ENCODE measurements at regions of chr2 and their contacts with region 1.

Region 1: GRCh38 chr2:189674374-189675112 is at the start of gene ANKAR:
- DNase-seq: peak; percentile 94
- ATAC-seq: peak; percentile 97
- H3K4me3 ChIP-seq: peak within 1 kb of the TSS; percentile 72 to 92 (median 85)
- H3K4me3 Mint-ChIP-seq: peak within 1 kb of the TSS; percentile 97
- H3K27ac ChIP-seq: peak within 1 kb of the TSS; percentile 93 to 98
- H3K27ac Mint-ChIP-seq: peak within 1 kb of the TSS; percentile 99
- H3K4me1 ChIP-seq: peaks cover 17 to 26% of the 10 kb centered on the region in 2 donors
- H3K4me1 Mint-ChIP-seq: peaks cover 38% of the 10 kb centered on the region
- H3K27me3 ChIP-seq: no peaks in the 10 kb centered on the region
- H3K27me3 Mint-ChIP-seq: no peaks in the 10 kb centered on the region
- CTCF ChIP-seq: peak; percentile 96
- total RNA-seq, gene ANKAR: 23.4 and 24.8 TPM in 2 replicates

Region 2: GRCh38 chr2:189698020-189698887 is 23.7 kb after region 1 on chr2:
- CTCF ChIA-PET with region 1: interaction called, 57 read pairs
- POLR2A ChIA-PET with region 1: no interaction called
- intact Hi-C with region 1: loop called (anchors 1 kb)
- DNase-seq: peak; percentile 70
- ATAC-seq: peak; percentile 57
- H3K4me3 ChIP-seq: no peak overlapping the region
- H3K4me3 Mint-ChIP-seq: no peak overlapping the region
- H3K27ac ChIP-seq: no peak overlapping the region
- H3K27ac Mint-ChIP-seq: peak overlapping the region; percentile 5
- H3K4me1 ChIP-seq: peaks cover 0 to 4% of the 10 kb centered on the region in 2 donors
- H3K4me1 Mint-ChIP-seq: peaks cover 2% of the 10 kb centered on the region
- H3K27me3 ChIP-seq: no peaks in the 10 kb centered on the region
- H3K27me3 Mint-ChIP-seq: no peaks in the 10 kb centered on the region
- CTCF ChIP-seq: peak; percentile 82

Region 3: DNA sequence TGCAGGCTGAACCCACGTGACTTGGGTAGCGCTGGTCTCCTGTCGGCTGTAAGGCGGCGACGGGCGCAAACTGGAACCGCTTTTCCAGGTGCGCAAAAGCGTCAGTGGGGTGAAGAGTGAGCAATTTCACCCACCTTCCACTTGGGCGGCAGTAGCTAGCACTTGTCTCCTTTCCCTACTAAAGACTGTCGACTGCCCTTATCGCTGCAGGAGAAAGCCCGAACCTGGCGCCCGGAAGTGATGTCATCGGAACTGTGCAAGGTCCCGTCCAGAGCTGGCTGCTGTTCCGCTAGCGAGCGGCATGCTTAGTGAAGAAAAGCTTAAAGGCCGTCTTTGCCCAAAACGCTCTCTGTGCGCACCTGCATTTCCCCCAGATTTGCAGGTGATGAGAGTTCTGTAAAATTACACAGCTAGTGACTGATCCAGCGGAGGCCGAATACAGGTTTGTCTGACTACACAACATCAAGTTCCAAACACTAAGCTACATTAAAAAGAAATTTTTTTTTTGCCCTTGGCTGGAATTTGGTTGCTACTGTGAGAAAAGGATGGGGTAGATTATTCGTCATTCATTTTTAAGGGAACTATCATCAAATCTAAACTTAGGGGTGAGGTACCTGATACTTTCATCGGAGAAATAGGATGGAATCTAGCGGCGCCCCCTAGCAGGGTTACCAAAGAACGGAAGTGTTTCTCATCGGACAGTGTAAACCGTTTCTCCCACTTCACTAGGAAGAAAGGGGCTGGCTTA is 88.2 kb after region 1 on chr2 and contains the start of gene OSGEPL1:
- CTCF ChIA-PET with region 1: interaction called, 37 read pairs
- POLR2A ChIA-PET with region 1: interaction called, 9 read pairs
- intact Hi-C with region 1: loop called (anchors 1 kb)
- DNase-seq: peak; percentile 96
- ATAC-seq: peak; percentile 92
- H3K4me3 ChIP-seq: peak within 1 kb of the TSS; percentile 67 to 100 (median 95)
- H3K4me3 Mint-ChIP-seq: peak within 1 kb of the TSS; percentile 98
- H3K27ac ChIP-seq: peak within 1 kb of the TSS; percentile 77 to 89
- H3K27ac Mint-ChIP-seq: peak within 1 kb of the TSS; percentile 98
- H3K4me1 ChIP-seq: peaks cover 9 to 10% of the 10 kb centered on the region in 2 donors
- H3K4me1 Mint-ChIP-seq: peaks cover 6% of the 10 kb centered on the region
- H3K27me3 ChIP-seq: no peaks in the 10 kb centered on the region
- H3K27me3 Mint-ChIP-seq: no peaks in the 10 kb centered on the region
- CTCF ChIP-seq: peak; percentile 73
- total RNA-seq, gene OSGEPL1: 11.2 and 12.6 TPM in 2 replicates

Region 4: GRCh38 chr2:190180313-190181122 is 506.0 kb after region 1 on chr2:
- CTCF ChIA-PET with region 1: no interaction called
- POLR2A ChIA-PET with region 1: no interaction called
- intact Hi-C with region 1: loop called (anchors 10 kb)
- DNase-seq: peak; percentile 70
- ATAC-seq: peak; percentile 89
- H3K4me3 ChIP-seq: peak overlapping the region in 4 of 5 experiments; percentile 48 to 71 (median 60)
- H3K4me3 Mint-ChIP-seq: peak overlapping the region; percentile 87
- H3K27ac ChIP-seq: no peak overlapping the region
- H3K27ac Mint-ChIP-seq: peak overlapping the region; percentile 85
- H3K4me1 ChIP-seq: peaks cover 16 to 22% of the 10 kb centered on the region in 2 donors
- H3K4me1 Mint-ChIP-seq: peaks cover 26% of the 10 kb centered on the region
- H3K27me3 ChIP-seq: peaks cover 0 to 9% (median 0%) of the 10 kb centered on the region in 4 experiments
- H3K27me3 Mint-ChIP-seq: no peaks in the 10 kb centered on the region
- CTCF ChIP-seq: peak; percentile 31

Measured in B cell (primary cell).